Ovary (tissue), 10 donors: ENCODE measurements at regions of chr3 and their contacts with region 1.

Region 1: DNA sequence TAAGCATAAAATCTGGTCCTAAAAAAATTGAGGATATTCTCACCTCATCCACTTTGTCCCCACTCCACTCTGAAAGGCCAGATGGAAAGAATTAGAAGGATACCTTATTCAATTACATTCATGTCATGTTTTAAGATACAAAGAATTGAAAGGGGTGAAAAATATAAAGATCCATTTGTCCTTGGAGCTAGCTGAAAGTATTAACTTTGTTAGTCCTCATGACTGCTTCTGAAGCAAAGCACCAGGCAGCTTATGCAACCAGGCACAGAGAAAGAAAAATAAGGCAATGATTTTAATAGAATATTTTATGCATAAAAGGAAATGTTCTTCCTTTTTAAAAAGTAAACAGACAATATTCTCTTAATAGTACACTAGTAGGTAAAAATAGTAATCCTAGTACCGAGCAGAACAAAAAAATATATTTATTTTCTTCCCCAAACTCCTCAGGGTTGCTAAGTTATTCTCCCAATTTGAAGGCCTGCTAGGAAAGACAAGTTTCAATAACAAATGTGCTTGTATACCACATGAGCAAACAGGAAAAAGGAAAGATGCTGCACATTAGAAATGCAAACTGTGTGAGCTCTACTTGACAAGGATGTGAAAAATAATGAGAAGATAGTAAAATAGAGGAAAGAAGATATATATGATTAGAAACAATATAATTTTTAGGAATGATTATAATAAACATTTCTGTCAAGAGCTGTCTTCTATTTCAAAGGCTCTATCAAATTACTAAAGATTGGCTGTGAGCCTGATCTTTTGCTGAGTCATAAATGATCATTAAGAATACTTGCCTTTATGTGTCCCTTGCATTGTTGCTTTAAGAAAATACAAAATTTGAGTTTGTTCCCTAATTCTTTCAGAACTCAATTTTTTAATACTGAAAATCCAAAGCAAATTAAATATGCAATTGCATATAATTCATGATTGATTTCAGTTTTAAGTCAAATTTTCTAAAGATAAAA is 174.4 kb downstream of the NEK10 start:
- DNase-seq: no peak
- H3K4me3 ChIP-seq: no peak overlapping the region
- H3K27ac ChIP-seq: no peak overlapping the region
- H3K4me1 ChIP-seq: peaks cover 1% of the 10 kb centered on the region
- H3K27me3 ChIP-seq: no peaks in the 10 kb centered on the region
- CTCF ChIP-seq: no peak
- EP300 ChIP-seq: no peak
- POLR2A ChIP-seq: no peak

Region 2: DNA sequence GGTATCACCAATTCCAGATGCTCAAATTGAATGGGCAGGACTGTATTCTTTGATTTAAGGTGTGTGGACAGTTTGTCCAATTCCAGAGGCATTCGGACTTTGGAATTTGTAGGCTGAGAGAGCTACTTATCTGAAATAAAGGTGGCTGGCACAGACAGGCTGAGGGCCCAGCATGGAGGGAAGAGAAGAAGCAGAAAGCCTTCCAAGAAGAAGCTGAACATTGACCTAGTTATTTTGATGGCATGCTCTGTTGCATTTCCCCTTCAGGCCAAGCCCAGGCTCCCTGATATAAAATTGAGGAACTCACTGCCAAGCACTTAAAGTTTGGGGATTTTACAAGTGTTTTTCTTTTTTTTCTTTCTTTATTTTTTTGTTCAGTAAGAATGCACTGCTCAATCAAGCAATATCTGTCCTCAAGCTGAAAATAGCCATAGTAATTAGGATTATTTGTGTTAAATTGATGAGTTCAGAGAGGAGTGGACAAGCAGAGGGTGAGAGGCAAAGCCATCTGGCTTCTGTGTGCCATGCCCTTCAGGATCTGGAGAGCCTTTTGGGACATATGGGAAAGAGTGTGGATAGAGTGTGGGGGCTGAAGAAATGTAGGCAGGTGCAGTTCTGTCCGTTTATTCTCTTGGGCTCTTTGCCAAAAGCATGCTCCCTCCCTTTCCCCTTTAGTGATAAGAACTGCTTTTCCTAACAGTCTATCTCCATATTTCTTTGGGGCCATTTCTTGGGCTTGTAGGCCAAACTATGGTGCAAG is 1256.0 kb before region 1 on chr3:
- intact Hi-C with region 1: loop called in 1 of 4 experiments (anchors 5 kb)
- DNase-seq: no peak
- H3K4me3 ChIP-seq: no peak overlapping the region
- H3K27ac ChIP-seq: no peak overlapping the region
- H3K4me1 ChIP-seq: no peaks in the 10 kb centered on the region
- H3K27me3 ChIP-seq: no peaks in the 10 kb centered on the region
- CTCF ChIP-seq: no peak
- EP300 ChIP-seq: no peak
- POLR2A ChIP-seq: no peak

Region 3: GRCh38 chr3:26768068-26768651 is 426.6 kb before region 1 on chr3:
- intact Hi-C with region 1: no loop called
- DNase-seq: no peak
- H3K4me3 ChIP-seq: no peak overlapping the region
- H3K27ac ChIP-seq: no peak overlapping the region
- H3K4me1 ChIP-seq: no peaks in the 10 kb centered on the region
- H3K27me3 ChIP-seq: no peaks in the 10 kb centered on the region
- CTCF ChIP-seq: no peak
- EP300 ChIP-seq: no peak
- POLR2A ChIP-seq: no peak